ENCODE measurements at regions of chr9 and their contacts with region 1.

Region 1: GRCh38 chr9:101533334-101534107 is at the start of gene RNF20:
- DNase-seq: peak; percentile 100
- ATAC-seq: peak; percentile 98 to 100 (median 98)
- H3K4me3 ChIP-seq: peak within 1 kb of the TSS; percentile 83
- H3K27ac ChIP-seq: peak within 1 kb of the TSS; percentile 88
- H3K4me1 ChIP-seq: peaks cover 18% of the 10 kb centered on the region
- H3K27me3 ChIP-seq: no peaks in the 10 kb centered on the region
- CTCF ChIP-seq: no peak
- total RNA-seq, gene RNF20: 41.1 to 56.9 (median 48.4) TPM

Region 2: DNA sequence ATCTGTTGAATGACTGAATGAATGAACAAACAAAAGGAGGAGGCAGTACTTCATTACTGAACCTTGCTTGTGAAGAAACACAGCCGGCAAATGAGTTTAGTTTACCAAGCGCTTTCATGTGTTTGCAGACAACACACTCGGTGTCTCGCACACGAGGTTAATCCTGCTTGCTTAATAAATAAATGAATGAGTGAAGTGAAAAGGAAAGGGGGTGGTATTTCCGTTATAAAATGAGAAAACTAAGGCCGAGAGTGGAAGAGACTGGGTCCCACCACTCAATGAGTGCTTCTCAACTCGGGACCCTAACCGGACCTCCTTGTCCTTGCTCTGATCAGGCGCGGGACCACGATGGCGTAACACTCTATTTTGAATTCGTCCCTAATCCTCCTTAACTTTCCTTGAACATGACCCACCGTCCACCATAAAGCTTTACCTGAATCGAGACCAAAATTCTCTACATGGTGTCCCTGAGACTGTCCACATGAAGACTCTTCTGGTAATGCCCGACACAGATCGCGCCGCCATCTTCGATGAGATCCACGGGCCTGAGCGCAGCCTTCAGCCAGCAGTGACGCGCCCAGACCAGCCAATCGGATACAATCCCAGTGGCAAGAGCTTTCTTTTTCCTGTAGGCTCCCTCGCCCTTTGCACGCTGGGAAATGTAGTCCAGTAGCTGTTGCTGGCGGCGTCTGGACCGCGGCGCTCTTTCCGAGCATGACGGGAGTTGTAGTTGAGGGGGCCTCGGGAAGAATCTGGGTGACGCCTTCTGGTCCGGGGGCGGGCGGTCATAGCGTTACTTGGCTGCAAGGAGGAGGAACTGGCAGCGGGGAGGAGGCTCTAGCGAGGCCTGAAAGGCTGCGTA is 135.2 kb before region 1 on chr9 and contains the starts of genes MRPL50 and ZNF189:
- intact Hi-C with region 1: loop called in 1 of 2 experiments (anchors 2 kb)
- DNase-seq: peak; percentile 97 to 98
- ATAC-seq: peak; percentile 96 to 99 (median 98)
- H3K4me3 ChIP-seq: peak within 1 kb of the TSS; percentile 81
- H3K27ac ChIP-seq: peak within 1 kb of the TSS; percentile 88
- H3K4me1 ChIP-seq: peaks cover 39% of the 10 kb centered on the region
- H3K27me3 ChIP-seq: no peaks in the 10 kb centered on the region
- CTCF ChIP-seq: no peak
- total RNA-seq, gene MRPL50: 11.0 to 15.2 (median 12.0) TPM
- total RNA-seq, gene ZNF189: 7.8 to 31.3 (median 12.2) TPM

Region 3: GRCh38 chr9:101449140-101449721 is 84.3 kb before region 1 on chr9:
- intact Hi-C with region 1: loop called in 1 of 2 experiments (anchors 2 kb)
- DNase-seq: peak; percentile 66 to 79
- ATAC-seq: peak; percentile 97 to 100 (median 98)
- H3K4me3 ChIP-seq: peak overlapping the region; percentile 76
- H3K27ac ChIP-seq: peak overlapping the region; percentile 58
- H3K4me1 ChIP-seq: peaks cover 3% of the 10 kb centered on the region
- H3K27me3 ChIP-seq: no peaks in the 10 kb centered on the region
- CTCF ChIP-seq: peak; percentile 62

Region 4: DNA sequence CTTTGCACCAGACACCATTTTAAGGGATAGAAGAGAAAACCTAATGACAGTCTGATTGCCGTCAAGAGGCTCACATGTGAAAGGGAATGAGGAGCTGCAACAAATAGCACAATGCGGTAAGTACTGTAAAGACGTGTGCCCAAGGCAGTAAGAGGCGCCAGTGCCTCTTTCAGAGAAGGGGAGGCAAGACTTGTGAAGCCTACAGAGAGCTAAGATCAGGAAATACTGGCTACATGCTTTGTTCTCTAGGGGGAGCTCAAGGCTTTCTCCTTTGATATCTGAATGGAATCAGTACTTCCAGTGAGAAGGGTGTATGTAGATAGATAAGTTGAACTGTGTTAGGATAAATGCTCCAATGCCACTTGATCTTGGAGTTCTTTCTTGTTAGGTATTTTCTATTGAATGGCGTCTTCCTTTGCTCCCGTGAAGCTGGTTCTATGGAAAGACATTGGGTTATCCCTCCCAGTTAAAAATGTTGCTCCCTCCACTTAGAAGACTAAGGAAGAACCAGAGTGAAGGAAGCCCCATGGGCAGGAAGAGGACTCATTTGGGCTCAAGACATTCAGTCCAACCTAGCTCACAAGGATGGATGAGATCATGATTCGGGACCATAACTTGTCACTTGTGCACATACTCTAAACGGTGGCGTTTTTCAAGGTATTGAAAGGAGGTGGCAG is 74.4 kb before region 1 on chr9:
- intact Hi-C with region 1: loop called (anchors 1 to 2 kb)
- DNase-seq: no peak
- ATAC-seq: peak; percentile 76 to 97 (median 92)
- H3K4me3 ChIP-seq: no peak overlapping the region
- H3K27ac ChIP-seq: no peak overlapping the region
- H3K4me1 ChIP-seq: no peaks in the 10 kb centered on the region
- H3K27me3 ChIP-seq: peaks cover 0 to 3% (median 0%) of the 10 kb centered on the region in 3 donors
- CTCF ChIP-seq: peak; percentile 79

Region 5: DNA sequence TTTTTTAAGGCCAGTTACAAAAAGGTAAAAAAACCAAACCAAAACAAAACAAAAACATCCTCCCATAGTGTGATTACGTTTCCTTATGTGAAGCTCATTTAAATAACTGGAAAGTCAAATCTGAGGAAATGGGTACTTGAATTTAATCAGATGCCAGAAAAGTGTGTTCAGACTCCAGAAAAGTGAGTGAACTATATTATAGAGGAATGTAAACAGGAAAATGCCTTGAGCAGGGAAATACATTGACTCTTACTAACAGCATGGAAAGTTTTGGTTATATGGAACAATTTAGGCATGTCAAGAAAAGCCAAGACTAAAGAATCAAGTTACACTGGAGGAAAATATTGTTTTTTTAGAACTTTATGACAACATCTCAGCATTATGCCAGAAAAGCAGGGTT is 37.7 kb before region 1 on chr9:
- intact Hi-C with region 1: loop called in 1 of 2 experiments (anchors 1 kb)
- DNase-seq: no peak
- ATAC-seq: no peak
- H3K4me3 ChIP-seq: no peak overlapping the region
- H3K27ac ChIP-seq: no peak overlapping the region
- H3K4me1 ChIP-seq: no peaks in the 10 kb centered on the region
- H3K27me3 ChIP-seq: no peaks in the 10 kb centered on the region
- CTCF ChIP-seq: no peak